PC-3 (cell line): ENCODE measurements at regions of chr5 and their contacts with region 1.

Region 1: GRCh38 chr5:160221082-160221481 is 8.2 kb upstream of the FABP6 start:
- DNase-seq: no peak
- ATAC-seq: no peak
- H3K4me3 ChIP-seq: no peak overlapping the region
- H3K27ac ChIP-seq: no peak overlapping the region
- H3K4me1 ChIP-seq: no peaks in the 10 kb centered on the region
- H3K27me3 ChIP-seq: no peaks in the 10 kb centered on the region
- CTCF ChIP-seq: no peak

Region 2: GRCh38 chr5:160245506-160246086 is 24.5 kb after region 1 on chr5:
- CTCF ChIA-PET with region 1: no interaction called
- POLR2A ChIA-PET with region 1: interaction called, 10 read pairs
- intact Hi-C with region 1: no loop called
- DNase-seq: no peak
- ATAC-seq: no peak
- H3K4me3 ChIP-seq: no peak overlapping the region
- H3K27ac ChIP-seq: no peak overlapping the region
- H3K4me1 ChIP-seq: no peaks in the 10 kb centered on the region
- H3K27me3 ChIP-seq: no peaks in the 10 kb centered on the region
- CTCF ChIP-seq: no peak

Region 3: GRCh38 chr5:160548949-160549665 is 328.0 kb after region 1 on chr5:
- CTCF ChIA-PET with region 1: no interaction called
- POLR2A ChIA-PET with region 1: no interaction called
- intact Hi-C with region 1: no loop called
- DNase-seq: no peak
- ATAC-seq: no peak
- H3K4me3 ChIP-seq: no peak overlapping the region
- H3K27ac ChIP-seq: no peak overlapping the region
- H3K4me1 ChIP-seq: no peaks in the 10 kb centered on the region
- H3K27me3 ChIP-seq: 0 out of 2 replicates have a peak, but pooled peaks cover 5% of the 10 kb centered on the region
- CTCF ChIP-seq: no peak